ENCODE measurements at regions of chr22 and their contacts with region 1.

Region 1: GRCh38 chr22:19143967-19144400 is 467 bp downstream of the ESS2 start:
- DNase-seq: peak in 5 of 9 experiments; percentile 28 to 71 (median 51)
- ATAC-seq: peak; percentile 14
- H3K4me3 ChIP-seq: peak overlapping the region; percentile 97 to 99
- H3K4me3 Mint-ChIP-seq: peak overlapping the region; percentile 98
- H3K27ac ChIP-seq: peak overlapping the region; percentile 95 to 98
- H3K27ac Mint-ChIP-seq: peak overlapping the region; percentile 98
- H3K4me1 ChIP-seq: peaks cover 11% of the 10 kb centered on the region
- H3K4me1 Mint-ChIP-seq: peaks cover 21% of the 10 kb centered on the region
- H3K27me3 ChIP-seq: peaks cover 2% of the 10 kb centered on the region in 2 experiments
- H3K27me3 Mint-ChIP-seq: peaks cover 11% of the 10 kb centered on the region
- CTCF ChIP-seq: no peak

Region 2: GRCh38 chr22:19109198-19110067 is 34.6 kb before region 1 on chr22:
- CTCF ChIA-PET with region 1: interaction called, 5 read pairs
- POLR2A ChIA-PET with region 1: interaction called, 13 read pairs
- intact Hi-C with region 1: loop called (anchors 1 kb)
- DNase-seq: peak; percentile 18 to 87 (median 59)
- ATAC-seq: peak; percentile 83
- H3K4me3 ChIP-seq: peak overlapping the region; percentile 33 to 54
- H3K4me3 Mint-ChIP-seq: peak overlapping the region; percentile 81
- H3K27ac ChIP-seq: peak overlapping the region; percentile 70 to 87
- H3K27ac Mint-ChIP-seq: peak overlapping the region; percentile 97
- H3K4me1 ChIP-seq: peaks cover 60% of the 10 kb centered on the region
- H3K4me1 Mint-ChIP-seq: peaks cover 74% of the 10 kb centered on the region
- H3K27me3 ChIP-seq: no peaks in the 10 kb centered on the region
- H3K27me3 Mint-ChIP-seq: no peaks in the 10 kb centered on the region
- CTCF ChIP-seq: no peak

Region 3: GRCh38 chr22:19178656-19179496 is 34.9 kb after region 1 on chr22 and contains the start of gene SLC25A1:
- CTCF ChIA-PET with region 1: interaction called, 6 read pairs
- POLR2A ChIA-PET with region 1: interaction called, 4 read pairs
- intact Hi-C with region 1: loop called (anchors 1 to 2 kb)
- DNase-seq: peak in 8 of 9 experiments; percentile 54 to 87 (median 78)
- ATAC-seq: peak; percentile 67
- H3K4me3 ChIP-seq: peak within 1 kb of the TSS; percentile 68 to 74
- H3K4me3 Mint-ChIP-seq: peak within 1 kb of the TSS; percentile 84
- H3K27ac ChIP-seq: peak within 1 kb of the TSS; percentile 42 to 65
- H3K27ac Mint-ChIP-seq: peak within 1 kb of the TSS; percentile 84
- H3K4me1 ChIP-seq: peaks cover 24% of the 10 kb centered on the region
- H3K4me1 Mint-ChIP-seq: peaks cover 22% of the 10 kb centered on the region
- H3K27me3 ChIP-seq: no peaks in the 10 kb centered on the region
- H3K27me3 Mint-ChIP-seq: no peaks in the 10 kb centered on the region
- CTCF ChIP-seq: no peak
- total RNA-seq, gene SLC25A1: 14.5 to 15.9 TPM

Region 4: DNA sequence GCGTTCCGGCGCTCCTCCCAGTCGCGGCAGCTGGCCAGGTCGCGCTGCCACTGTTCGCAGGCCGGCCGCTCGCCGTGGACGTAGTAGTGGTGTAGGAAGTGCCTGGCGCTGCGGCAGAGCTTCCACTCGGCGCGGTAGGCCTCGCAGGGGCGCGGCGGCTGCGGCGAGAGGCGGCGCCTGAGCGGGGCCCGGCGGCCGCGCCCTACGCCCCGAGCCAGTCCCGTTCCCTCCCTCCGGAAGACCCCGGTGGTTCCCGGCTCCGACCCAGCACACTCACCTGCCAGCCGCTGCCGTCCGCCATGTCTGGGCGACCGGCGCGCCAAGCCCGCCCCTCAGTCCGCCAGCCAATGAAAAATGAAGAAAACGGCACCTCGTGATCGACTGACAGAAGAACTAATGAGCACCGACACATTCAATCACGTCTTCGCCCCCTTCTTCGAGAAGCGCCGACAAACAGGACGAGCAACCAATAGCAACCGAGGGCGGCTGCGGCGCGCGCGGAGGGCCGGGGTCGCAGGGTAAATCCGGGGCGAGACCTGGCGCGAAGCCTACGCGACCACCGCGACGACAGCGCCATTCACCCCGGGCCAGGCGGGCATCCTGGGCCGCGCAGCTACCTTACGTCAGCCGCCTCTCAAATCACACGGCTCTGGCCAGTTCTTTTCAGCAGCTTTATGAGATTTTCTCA is 303.5 kb after region 1 on chr22 and contains the start of gene C22orf39:
- CTCF ChIA-PET with region 1: interaction called, 5 read pairs
- POLR2A ChIA-PET with region 1: no interaction called
- intact Hi-C with region 1: loop called in 1 of 2 experiments (anchors 1 kb)
- DNase-seq: peak; percentile 72 to 95 (median 87)
- ATAC-seq: peak; percentile 90
- H3K4me3 ChIP-seq: peak within 1 kb of the TSS; percentile 78 to 93
- H3K4me3 Mint-ChIP-seq: peak within 1 kb of the TSS; percentile 92
- H3K27ac ChIP-seq: peak within 1 kb of the TSS; percentile 85 to 92
- H3K27ac Mint-ChIP-seq: peak within 1 kb of the TSS; percentile 93
- H3K4me1 ChIP-seq: peaks cover 27% of the 10 kb centered on the region
- H3K4me1 Mint-ChIP-seq: peaks cover 42% of the 10 kb centered on the region
- H3K27me3 ChIP-seq: no peaks in the 10 kb centered on the region
- H3K27me3 Mint-ChIP-seq: no peaks in the 10 kb centered on the region
- CTCF ChIP-seq: no peak
- total RNA-seq, gene C22orf39: 31.0 to 34.1 TPM

Region 5: GRCh38 chr22:19717691-19718455 is 573.9 kb after region 1 on chr22:
- CTCF ChIA-PET with region 1: no interaction called
- POLR2A ChIA-PET with region 1: no interaction called
- intact Hi-C with region 1: loop called in 1 of 2 experiments (anchors 1 kb)
- DNase-seq: peak; percentile 71 to 90 (median 78)
- ATAC-seq: peak; percentile 95
- H3K4me3 ChIP-seq: peak overlapping the region; percentile 29 to 46
- H3K4me3 Mint-ChIP-seq: peak overlapping the region; percentile 65
- H3K27ac ChIP-seq: no peak overlapping the region
- H3K27ac Mint-ChIP-seq: no peak overlapping the region
- H3K4me1 ChIP-seq: peaks cover 29% of the 10 kb centered on the region
- H3K4me1 Mint-ChIP-seq: peaks cover 12% of the 10 kb centered on the region
- H3K27me3 ChIP-seq: peaks cover 17 to 20% of the 10 kb centered on the region in 2 experiments
- H3K27me3 Mint-ChIP-seq: peaks cover 36% of the 10 kb centered on the region
- CTCF ChIP-seq: peak; percentile 97